Ascending aorta (tissue), 2 donors: ENCODE measurements at regions of chr1 and their contacts with region 1.

Region 1: DNA sequence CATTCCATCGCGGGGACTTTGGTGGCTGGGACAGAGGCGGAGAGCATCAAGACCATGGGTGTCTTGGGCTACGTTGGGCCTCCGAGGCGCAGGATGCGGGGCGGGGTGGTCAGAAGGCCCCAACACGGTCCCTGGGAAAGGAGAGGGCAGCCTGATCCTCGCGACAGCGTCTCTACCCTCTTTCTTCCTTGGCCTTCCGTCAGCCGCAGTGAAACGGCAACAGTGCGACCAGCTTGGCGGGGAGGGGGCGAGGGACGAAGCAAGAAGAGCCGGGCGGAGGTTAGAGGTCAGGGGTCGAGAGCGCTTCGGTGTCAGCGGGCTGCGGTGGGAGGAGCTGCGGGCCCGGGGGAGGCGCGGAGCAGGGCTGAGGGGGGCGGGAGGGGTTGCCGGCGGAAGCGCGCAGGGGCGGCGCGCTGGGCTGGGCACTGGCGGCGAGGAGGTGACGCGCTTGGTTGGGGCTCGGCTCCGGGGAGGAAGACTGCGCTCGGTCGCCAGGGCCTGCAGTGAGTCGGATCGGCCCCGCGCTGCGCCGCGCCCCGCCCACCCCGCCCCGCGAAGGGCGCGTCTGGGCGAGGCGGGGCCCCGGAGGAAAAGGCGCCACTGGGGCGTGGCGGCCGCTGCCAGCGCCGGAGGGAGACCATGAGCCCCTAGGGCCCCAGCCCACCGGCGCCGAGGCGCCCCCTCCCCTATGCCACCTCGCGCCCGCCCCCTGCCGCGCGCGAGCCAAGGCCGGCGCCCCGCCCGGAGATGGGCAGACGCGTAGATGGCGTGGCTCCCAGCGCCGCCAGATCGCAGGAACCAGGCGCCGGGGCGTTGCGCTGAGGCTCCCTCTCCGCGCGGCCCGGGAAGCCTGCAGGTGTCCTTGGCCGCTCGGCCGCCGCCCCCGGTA is at the start of gene KCNC4:
- DNase-seq: peak; percentile 50 to 95
- H3K4me3 ChIP-seq: peak within 1 kb of the TSS; percentile 89 to 96
- H3K27ac ChIP-seq: peak within 1 kb of the TSS; percentile 89 to 95
- H3K4me1 ChIP-seq: peaks cover 3 to 21% of the 10 kb centered on the region in 2 donors
- H3K27me3 ChIP-seq: no peaks in the 10 kb centered on the region
- CTCF ChIP-seq: no peak
- total RNA-seq, gene KCNC4: 8.4 TPM

Region 2: DNA sequence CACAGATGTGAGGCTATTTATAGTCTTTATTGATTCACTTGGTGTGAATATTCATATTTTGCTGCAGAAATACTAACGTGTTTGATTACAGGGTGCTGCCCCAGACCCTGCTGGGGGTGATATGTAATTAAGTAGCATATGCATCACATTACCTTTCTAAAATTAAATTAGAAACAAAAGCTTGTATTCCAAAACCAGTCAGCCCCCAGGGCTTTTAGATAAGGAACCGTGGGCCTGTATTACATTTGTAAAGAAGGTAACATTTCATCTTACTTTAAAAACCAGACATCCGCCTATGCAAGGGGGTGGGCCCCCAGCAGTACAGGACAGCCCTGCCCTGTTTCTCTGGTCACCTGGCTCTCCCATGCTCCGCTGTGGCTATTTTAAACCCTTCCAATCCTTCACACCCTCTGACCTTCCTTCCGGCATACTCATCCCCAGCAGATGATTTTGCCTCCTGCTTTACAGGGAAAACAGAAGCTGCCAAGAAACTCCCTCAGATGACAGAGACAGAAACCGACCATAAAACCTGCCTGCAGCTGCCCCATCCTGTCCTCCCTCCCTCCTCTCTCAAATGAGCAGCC is 21.8 kb before region 1 on chr1:
- intact Hi-C with region 1: loop called (anchors 2 kb)
- DNase-seq: no peak
- H3K4me3 ChIP-seq: peak overlapping the region in 1 of 2 donors; percentile 4
- H3K27ac ChIP-seq: peak overlapping the region; percentile 90 to 92
- H3K4me1 ChIP-seq: peaks cover 10 to 34% of the 10 kb centered on the region in 2 donors
- H3K27me3 ChIP-seq: no peaks in the 10 kb centered on the region
- CTCF ChIP-seq: no peak

Region 3: GRCh38 chr1:110312188-110313121 is 102.5 kb after region 1 on chr1:
- intact Hi-C with region 1: loop called (anchors 1 kb)
- DNase-seq: peak; percentile 26 to 80
- H3K4me3 ChIP-seq: no peak overlapping the region
- H3K27ac ChIP-seq: no peak overlapping the region
- H3K4me1 ChIP-seq: no peaks in the 10 kb centered on the region
- H3K27me3 ChIP-seq: no peaks in the 10 kb centered on the region
- CTCF ChIP-seq: peak; percentile 83 to 92 (median 91)

Region 4: GRCh38 chr1:110390692-110391245 is 180.8 kb after region 1 on chr1 and contains the start of gene SLC16A4:
- intact Hi-C with region 1: loop called (anchors 2 kb)
- DNase-seq: peak in 1 of 2 donors; percentile 76
- H3K4me3 ChIP-seq: peak within 1 kb of the TSS; percentile 55 to 60
- H3K27ac ChIP-seq: peak within 1 kb of the TSS; percentile 73 to 84
- H3K4me1 ChIP-seq: peaks cover 5 to 22% of the 10 kb centered on the region in 2 donors
- H3K27me3 ChIP-seq: no peaks in the 10 kb centered on the region
- CTCF ChIP-seq: no peak
- total RNA-seq, gene SLC16A4: 5.6 TPM

Region 5: GRCh38 chr1:110407260-110408210 is 197.6 kb after region 1 on chr1 and contains the start of gene LAMTOR5:
- intact Hi-C with region 1: loop called (anchors 1 kb)
- DNase-seq: peak; percentile 75 to 97
- H3K4me3 ChIP-seq: peak within 1 kb of the TSS; percentile 81 to 93
- H3K27ac ChIP-seq: peak within 1 kb of the TSS; percentile 93 to 96
- H3K4me1 ChIP-seq: peaks cover 9 to 16% of the 10 kb centered on the region in 2 donors
- H3K27me3 ChIP-seq: no peaks in the 10 kb centered on the region
- CTCF ChIP-seq: peak in 2 of 3 experiments; percentile 5 to 15
- total RNA-seq, gene LAMTOR5: 21.7 TPM

Region 6: DNA sequence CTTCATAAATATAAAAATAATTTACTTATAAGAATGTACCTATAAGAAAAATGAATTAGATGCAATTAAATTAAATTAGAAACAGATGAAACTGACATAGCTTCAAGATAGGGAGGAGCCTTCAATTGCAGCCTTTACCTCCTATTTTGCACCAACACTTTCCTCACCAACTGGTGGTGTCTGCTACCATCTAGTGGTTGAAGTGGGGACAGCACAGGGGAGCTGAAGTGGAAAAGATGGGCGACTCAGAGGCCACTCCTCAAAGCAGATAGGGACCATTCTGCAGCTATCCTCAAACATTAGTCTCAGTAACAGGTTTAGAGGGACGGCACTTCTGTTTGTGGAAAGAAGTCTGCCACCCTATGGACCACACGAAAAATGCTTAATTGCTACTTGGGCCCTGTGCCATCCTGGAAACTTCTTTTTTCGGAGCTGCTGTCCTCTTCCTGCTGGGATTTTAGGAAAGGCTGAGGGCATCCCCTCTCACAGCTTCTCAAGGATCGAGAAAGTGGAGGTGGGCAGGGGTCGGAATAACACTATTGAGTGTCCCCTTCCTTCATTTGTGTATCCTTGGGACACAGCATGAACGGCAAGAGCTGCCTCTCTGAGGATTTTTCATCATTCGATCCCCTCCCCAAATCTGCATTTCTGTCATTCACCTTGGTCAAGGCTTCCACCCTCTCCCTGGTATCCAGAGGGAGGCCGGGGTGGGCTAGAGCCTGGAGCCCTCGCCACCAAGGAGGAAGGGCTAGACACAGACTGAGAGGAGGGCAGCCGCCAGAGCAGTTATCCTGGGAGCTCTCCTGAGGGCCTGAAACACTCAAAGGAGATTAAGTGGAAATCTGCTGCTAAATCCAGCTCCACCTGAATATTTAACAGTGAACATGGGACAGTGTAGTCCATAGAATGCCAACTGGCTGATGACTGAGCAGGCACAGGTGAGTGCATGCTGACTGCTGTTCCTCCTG is 250.6 kb after region 1 on chr1:
- intact Hi-C with region 1: loop called (anchors 1 kb)
- DNase-seq: peak in 1 of 2 donors; percentile 91
- H3K4me3 ChIP-seq: no peak overlapping the region
- H3K27ac ChIP-seq: no peak overlapping the region
- H3K4me1 ChIP-seq: no peaks in the 10 kb centered on the region
- H3K27me3 ChIP-seq: no peaks in the 10 kb centered on the region
- CTCF ChIP-seq: peak; percentile 92 to 96 (median 95)